Activated CD4-positive, alpha-beta T cell treated with anti-CD3 and anti-CD28 coated beads for 36 hours (primary cell): ENCODE measurements at regions of chr19 and their contacts with region 1.

Region 1: GRCh38 chr19:19320362-19321142 is at the starts of genes MAU2 and SUGP1:
- DNase-seq: peak; percentile 96
- ATAC-seq: peak; percentile 93
- H3K4me3 Mint-ChIP-seq: peak within 1 kb of the TSS; percentile 93
- H3K27ac Mint-ChIP-seq: peak within 1 kb of the TSS; percentile 100
- H3K4me1 Mint-ChIP-seq: peaks cover 39% of the 10 kb centered on the region
- H3K27me3 Mint-ChIP-seq: no peaks in the 10 kb centered on the region
- total RNA-seq, gene MAU2: 33.3 to 45.7 TPM
- total RNA-seq, gene SUGP1: 49.4 to 62.0 TPM

Region 2: GRCh38 chr19:19203012-19203856 is 117.3 kb before region 1 on chr19 and contains the start of gene NR2C2AP:
- CTCF ChIA-PET with region 1: no interaction called
- POLR2A ChIA-PET with region 1: no interaction called
- intact Hi-C with region 1: loop called (anchors 1 kb)
- DNase-seq: peak; percentile 96
- ATAC-seq: peak; percentile 95
- H3K4me3 Mint-ChIP-seq: peak within 1 kb of the TSS; percentile 90
- H3K27ac Mint-ChIP-seq: peak within 1 kb of the TSS; percentile 84
- H3K4me1 Mint-ChIP-seq: peaks cover 30% of the 10 kb centered on the region
- H3K27me3 Mint-ChIP-seq: no peaks in the 10 kb centered on the region
- total RNA-seq, gene NR2C2AP: 34.7 to 46.6 TPM

Region 3: DNA sequence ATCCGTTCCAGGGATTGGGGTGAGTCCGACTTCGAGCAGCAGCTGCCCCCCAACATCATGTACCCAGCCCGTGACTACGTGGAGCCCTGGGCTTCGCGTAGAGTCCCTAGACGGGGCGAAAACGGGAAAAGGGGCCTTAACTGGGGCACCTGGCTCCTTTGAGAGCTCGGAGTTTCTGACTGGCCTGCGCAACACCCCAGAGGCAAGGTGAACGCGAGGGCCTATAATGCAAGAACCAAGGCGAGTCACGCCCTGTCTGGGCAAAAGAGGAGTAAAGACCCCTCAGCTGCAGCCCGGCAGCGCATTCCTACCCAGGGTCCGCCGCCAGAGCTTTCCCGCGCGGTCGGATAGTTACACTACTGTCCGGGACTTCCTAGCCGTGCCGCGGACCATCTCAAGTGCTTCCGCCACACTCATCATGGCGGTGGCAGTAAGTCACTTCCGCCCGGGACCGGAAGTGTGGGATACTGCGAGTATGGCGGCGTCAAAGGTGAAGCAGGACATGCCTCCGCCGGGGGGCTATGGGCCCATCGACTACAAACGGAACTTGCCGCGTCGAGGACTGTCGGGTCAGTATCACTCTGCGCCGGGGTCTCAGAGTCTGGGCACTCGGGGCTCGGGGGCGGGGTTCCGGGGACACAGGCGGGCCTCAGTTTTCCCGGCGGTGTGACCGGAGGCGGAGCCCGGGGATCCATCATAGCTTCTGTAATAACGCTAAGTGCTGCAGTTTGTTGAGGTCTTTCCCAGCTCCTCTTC is 195.4 kb after region 1 on chr19 and contains the start of gene NDUFA13:
- CTCF ChIA-PET with region 1: interaction called, 3 read pairs
- POLR2A ChIA-PET with region 1: interaction called, 4 read pairs
- intact Hi-C with region 1: loop called in 1 of 2 experiments (anchors 1 kb)
- DNase-seq: peak; percentile 95
- ATAC-seq: peak; percentile 94
- H3K4me3 Mint-ChIP-seq: peak within 1 kb of the TSS; percentile 83
- H3K27ac Mint-ChIP-seq: peak within 1 kb of the TSS; percentile 92
- H3K4me1 Mint-ChIP-seq: peaks cover 25% of the 10 kb centered on the region
- H3K27me3 Mint-ChIP-seq: no peaks in the 10 kb centered on the region
- total RNA-seq, gene NDUFA13: 310 to 323 TPM

Region 4: GRCh38 chr19:19937403-19937802 is 616.9 kb after region 1 on chr19:
- CTCF ChIA-PET with region 1: no interaction called
- POLR2A ChIA-PET with region 1: no interaction called
- intact Hi-C with region 1: no loop called
- DNase-seq: no peak
- ATAC-seq: no peak
- H3K4me3 Mint-ChIP-seq: no peak overlapping the region
- H3K27ac Mint-ChIP-seq: no peak overlapping the region
- H3K4me1 Mint-ChIP-seq: no peaks in the 10 kb centered on the region
- H3K27me3 Mint-ChIP-seq: no peaks in the 10 kb centered on the region